ENCODE measurements at regions of chr16 and their contacts with region 1.

Region 1: DNA sequence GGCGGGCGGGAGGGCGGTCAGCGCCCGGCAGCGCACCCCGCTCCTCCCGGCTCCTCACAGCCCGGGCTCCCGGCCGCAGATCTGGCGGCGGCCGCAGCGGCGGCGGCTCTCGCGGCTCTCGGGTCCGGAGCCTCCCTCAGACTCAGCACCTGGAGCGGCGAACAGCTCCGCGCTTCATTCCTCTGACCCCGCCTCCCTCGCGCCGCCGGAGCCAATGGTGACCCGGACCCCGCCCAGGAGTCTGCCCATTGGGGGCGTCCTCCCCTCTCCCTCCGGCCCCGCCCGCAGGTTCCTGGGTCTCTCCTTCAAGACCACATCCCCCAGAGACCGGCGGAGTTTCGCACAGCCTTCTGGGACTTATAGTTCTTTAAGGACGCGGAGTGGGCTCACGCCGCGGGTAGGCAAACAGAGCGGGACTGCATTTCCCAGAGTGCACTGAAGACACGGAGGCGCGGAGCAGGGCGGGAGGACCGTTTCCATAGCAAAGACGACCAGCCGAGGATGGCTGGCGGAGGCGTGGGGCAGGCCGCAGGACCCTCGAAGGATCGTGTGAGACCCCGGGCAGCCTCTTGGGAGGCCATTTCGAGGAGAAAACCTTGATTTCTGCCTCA is at the start of gene SMPD3:
- DNase-seq: peak; percentile 99
- ATAC-seq: peak; percentile 98
- H3K4me3 Mint-ChIP-seq: peak within 1 kb of the TSS; percentile 71
- H3K27ac Mint-ChIP-seq: no peak within 1 kb of the TSS
- H3K4me1 Mint-ChIP-seq: peaks cover 14% of the 10 kb centered on the region
- H3K27me3 Mint-ChIP-seq: peaks cover 19% of the 10 kb centered on the region
- total RNA-seq, gene SMPD3: 0.07 to 0.37 TPM

Region 2: GRCh38 chr16:67719048-67719777 is 729.3 kb before region 1 on chr16 and contains the start of gene GFOD2:
- CTCF ChIA-PET with region 1: no interaction called
- POLR2A ChIA-PET with region 1: no interaction called
- intact Hi-C with region 1: loop called in 1 of 2 experiments (anchors 5 kb)
- DNase-seq: peak; percentile 99
- ATAC-seq: peak; percentile 95
- H3K4me3 Mint-ChIP-seq: peak within 1 kb of the TSS; percentile 82
- H3K27ac Mint-ChIP-seq: peak within 1 kb of the TSS; percentile 98
- H3K4me1 Mint-ChIP-seq: peaks cover 29% of the 10 kb centered on the region
- H3K27me3 Mint-ChIP-seq: no peaks in the 10 kb centered on the region
- total RNA-seq, gene GFOD2: 8.7 to 11.5 TPM

Region 3: DNA sequence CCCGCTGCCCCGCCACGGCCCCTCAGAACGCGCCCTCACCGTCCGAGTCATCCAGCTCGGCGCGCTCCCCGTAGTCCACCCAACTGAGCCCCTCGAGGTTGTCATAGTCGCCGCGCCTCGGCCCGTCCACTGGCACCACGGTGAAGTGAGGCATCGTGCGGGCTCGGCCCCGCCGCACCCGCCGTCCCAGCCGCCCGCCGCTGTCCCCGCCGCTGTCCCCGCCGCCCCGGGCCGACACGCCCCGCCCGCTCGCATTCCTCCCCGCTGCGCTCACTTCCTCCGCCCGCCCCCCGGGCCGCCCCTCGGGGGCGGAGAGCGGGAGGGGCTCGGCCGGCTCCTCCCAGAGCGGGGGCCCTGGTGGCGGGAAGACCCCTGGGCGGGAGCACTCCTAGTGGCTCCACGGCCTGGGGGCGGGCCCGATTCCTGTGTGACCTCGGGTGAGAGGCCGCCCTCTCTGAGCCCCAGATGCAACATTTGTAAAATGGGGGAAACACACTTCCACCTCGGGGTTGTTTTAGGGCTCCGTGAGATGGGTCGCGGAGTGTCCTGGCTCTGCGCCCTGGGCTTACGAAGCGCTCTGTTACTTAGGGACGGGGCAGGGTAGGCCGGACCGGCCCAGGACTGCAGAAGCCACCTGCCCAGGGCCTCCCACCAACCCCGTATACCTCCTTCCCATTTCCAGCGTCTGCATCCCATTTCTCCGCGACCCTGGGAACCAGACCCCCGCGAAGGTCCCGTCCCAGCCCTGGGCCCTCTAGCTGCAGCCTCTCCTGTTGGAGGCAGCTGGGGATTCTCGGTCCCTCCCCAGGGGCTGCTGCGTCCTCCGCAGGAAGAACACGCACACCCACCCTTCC is 479.8 kb before region 1 on chr16 and contains the start of gene SLC12A4:
- CTCF ChIA-PET with region 1: no interaction called
- POLR2A ChIA-PET with region 1: no interaction called
- intact Hi-C with region 1: loop called in 1 of 2 experiments (anchors 1 kb)
- DNase-seq: peak; percentile 94
- ATAC-seq: peak; percentile 90
- H3K4me3 Mint-ChIP-seq: peak within 1 kb of the TSS; percentile 84
- H3K27ac Mint-ChIP-seq: peak within 1 kb of the TSS; percentile 80
- H3K4me1 Mint-ChIP-seq: peaks cover 14% of the 10 kb centered on the region
- H3K27me3 Mint-ChIP-seq: no peaks in the 10 kb centered on the region
- total RNA-seq, gene SLC12A4: 21.8 to 25.8 TPM

Region 4: GRCh38 chr16:68310761-68311511 is 137.5 kb before region 1 on chr16 and contains the starts of genes PRMT7 and SLC7A6OS:
- CTCF ChIA-PET with region 1: no interaction called
- POLR2A ChIA-PET with region 1: no interaction called
- intact Hi-C with region 1: loop called in 1 of 2 experiments (anchors 1 kb)
- DNase-seq: peak; percentile 97
- ATAC-seq: peak; percentile 99
- H3K4me3 Mint-ChIP-seq: peak within 1 kb of the TSS; percentile 90
- H3K27ac Mint-ChIP-seq: peak within 1 kb of the TSS; percentile 92
- H3K4me1 Mint-ChIP-seq: peaks cover 42% of the 10 kb centered on the region
- H3K27me3 Mint-ChIP-seq: no peaks in the 10 kb centered on the region
- total RNA-seq, gene PRMT7: 62.7 to 70.7 TPM
- total RNA-seq, gene SLC7A6OS: 17.4 to 21.7 TPM

Region 5: GRCh38 chr16:68434624-68435197 is 13.8 kb before region 1 on chr16:
- CTCF ChIA-PET with region 1: interaction called, 10 read pairs
- POLR2A ChIA-PET with region 1: no interaction called
- intact Hi-C with region 1: no loop called
- DNase-seq: peak; percentile 22
- ATAC-seq: no peak
- H3K4me3 Mint-ChIP-seq: no peak overlapping the region
- H3K27ac Mint-ChIP-seq: no peak overlapping the region
- H3K4me1 Mint-ChIP-seq: peaks cover 14% of the 10 kb centered on the region
- H3K27me3 Mint-ChIP-seq: peaks cover 2% of the 10 kb centered on the region

Region 6: GRCh38 chr16:68520649-68521086 is 72.2 kb after region 1 on chr16:
- CTCF ChIA-PET with region 1: interaction called, 3 read pairs
- POLR2A ChIA-PET with region 1: no interaction called
- intact Hi-C with region 1: loop called in 1 of 2 experiments (anchors 1 kb)
- DNase-seq: peak; percentile 94
- ATAC-seq: peak; percentile 99
- H3K4me3 Mint-ChIP-seq: peak overlapping the region; percentile 11
- H3K27ac Mint-ChIP-seq: peak overlapping the region; percentile 19
- H3K4me1 Mint-ChIP-seq: peaks cover 4% of the 10 kb centered on the region
- H3K27me3 Mint-ChIP-seq: peaks cover 2% of the 10 kb centered on the region

Region 7: GRCh38 chr16:68577352-68577853 is 128.9 kb after region 1 on chr16:
- CTCF ChIA-PET with region 1: no interaction called
- POLR2A ChIA-PET with region 1: no interaction called
- intact Hi-C with region 1: no loop called
- DNase-seq: no peak
- ATAC-seq: no peak
- H3K4me3 Mint-ChIP-seq: no peak overlapping the region
- H3K27ac Mint-ChIP-seq: no peak overlapping the region
- H3K4me1 Mint-ChIP-seq: no peaks in the 10 kb centered on the region
- H3K27me3 Mint-ChIP-seq: no peaks in the 10 kb centered on the region

Region 8: GRCh38 chr16:68843482-68844210 is 395.2 kb after region 1 on chr16 and contains the start of gene TANGO6:
- CTCF ChIA-PET with region 1: no interaction called
- POLR2A ChIA-PET with region 1: no interaction called
- intact Hi-C with region 1: loop called in 1 of 2 experiments (anchors 1 kb)
- DNase-seq: peak; percentile 95
- ATAC-seq: peak; percentile 93
- H3K4me3 Mint-ChIP-seq: peak within 1 kb of the TSS; percentile 84
- H3K27ac Mint-ChIP-seq: peak within 1 kb of the TSS; percentile 91
- H3K4me1 Mint-ChIP-seq: peaks cover 27% of the 10 kb centered on the region
- H3K27me3 Mint-ChIP-seq: no peaks in the 10 kb centered on the region
- total RNA-seq, gene TANGO6: 29.7 to 31.2 TPM